Heart left ventricle (tissue), 16 donors: ENCODE measurements at regions of chr22 and their contacts with region 1.

Region 1: DNA sequence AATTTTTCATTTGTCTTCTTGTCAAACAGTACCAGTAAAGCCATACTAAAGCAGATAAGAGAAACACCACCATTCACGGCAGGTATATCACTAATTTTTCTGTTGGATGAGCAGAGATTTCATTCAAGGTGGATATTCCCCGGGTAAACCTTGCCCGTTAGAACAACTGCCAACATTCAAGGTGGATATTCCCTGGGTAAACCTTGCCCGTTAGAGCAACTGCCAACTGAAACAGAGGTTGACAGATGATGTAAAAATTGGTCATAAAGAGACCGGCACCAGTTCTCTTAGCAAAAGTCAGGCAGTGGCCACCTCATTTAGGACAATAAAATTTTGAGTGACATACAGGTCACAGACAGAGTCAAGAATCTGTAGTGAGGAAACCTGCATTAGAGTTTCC is 423.4 kb upstream of the SYN3 start:
- DNase-seq: no peak
- ATAC-seq: no peak
- H3K4me3 ChIP-seq: no peak overlapping the region
- H3K27ac ChIP-seq: no peak overlapping the region
- H3K4me1 ChIP-seq: peaks cover 0 to 23% (median 5%) of the 10 kb centered on the region in 12 donors
- H3K27me3 ChIP-seq: no peaks in the 10 kb centered on the region
- CTCF ChIP-seq: no peak
- POLR2A ChIP-seq: no peak

Region 2: DNA sequence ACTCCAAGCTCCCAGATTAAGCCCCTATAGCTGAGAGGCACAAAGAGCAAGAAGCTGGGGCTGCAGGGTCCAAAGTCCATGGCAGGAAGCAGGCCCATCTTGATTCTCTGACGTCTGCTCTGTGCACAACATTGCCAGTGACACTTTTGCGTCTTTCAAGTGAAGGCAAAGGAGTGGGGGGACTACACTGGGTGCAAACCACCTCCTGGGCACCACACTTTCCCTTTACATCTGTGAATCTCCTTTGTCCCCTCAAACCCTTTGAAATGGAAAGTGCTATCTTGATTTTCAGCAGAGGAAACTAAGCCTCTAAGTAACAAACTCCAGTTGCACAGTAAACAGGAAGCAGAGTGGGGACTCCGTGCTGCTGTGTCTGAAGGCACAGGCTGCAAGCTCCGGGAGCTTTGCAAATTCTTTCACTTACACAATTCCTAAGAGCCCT is 10.7 kb after region 1 on chr22:
- intact Hi-C with region 1: no loop called
- DNase-seq: no peak
- ATAC-seq: peak in 3 of 4 donors; percentile 47 to 72 (median 49)
- H3K4me3 ChIP-seq: peak overlapping the region in 8 of 12 donors; percentile 8 to 35 (median 26)
- H3K27ac ChIP-seq: peak overlapping the region in 10 of 12 donors; percentile 5 to 48 (median 33)
- H3K4me1 ChIP-seq: peaks cover 0 to 37% (median 12%) of the 10 kb centered on the region in 12 donors
- H3K27me3 ChIP-seq: no peaks in the 10 kb centered on the region
- CTCF ChIP-seq: no peak
- POLR2A ChIP-seq: no peak

Region 3: DNA sequence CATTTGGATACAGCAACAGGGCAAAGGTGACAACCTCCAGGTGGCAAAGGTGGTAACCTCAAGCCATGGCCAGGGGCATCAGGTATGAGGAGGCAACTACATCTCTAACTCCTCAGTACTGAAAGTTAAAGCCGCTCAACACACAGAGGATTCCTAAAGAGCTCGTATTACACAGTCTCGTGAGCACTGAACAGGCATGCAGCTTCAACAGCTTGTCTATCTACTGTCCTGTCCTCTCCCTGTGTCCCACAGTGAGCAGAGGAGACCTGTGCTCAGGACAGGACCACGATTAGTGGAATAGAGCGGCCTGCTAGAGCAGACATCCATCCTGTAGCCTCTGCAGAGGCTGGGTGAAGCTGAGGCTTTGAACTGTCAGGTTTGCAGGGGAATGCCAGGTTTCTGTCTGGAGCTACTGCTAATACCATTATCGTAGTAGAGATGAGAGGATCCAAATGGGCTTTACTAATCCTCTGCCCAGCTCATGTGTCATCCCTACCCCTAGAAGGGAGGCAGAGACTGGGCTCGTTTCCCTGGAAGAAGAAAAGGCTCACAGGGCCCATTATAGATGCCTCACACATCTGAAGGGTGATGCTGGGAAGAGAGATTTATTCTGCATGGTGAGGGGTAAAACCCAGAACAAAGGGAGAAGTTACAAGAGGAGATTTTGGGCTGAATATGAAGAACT is 23.5 kb after region 1 on chr22:
- intact Hi-C with region 1: loop called in 1 of 10 experiments (anchors 2 kb)
- DNase-seq: no peak
- ATAC-seq: peak; percentile 11 to 48 (median 33)
- H3K4me3 ChIP-seq: no peak overlapping the region
- H3K27ac ChIP-seq: no peak overlapping the region
- H3K4me1 ChIP-seq: peaks cover 0 to 10% (median 0%) of the 10 kb centered on the region in 12 donors
- H3K27me3 ChIP-seq: no peaks in the 10 kb centered on the region
- CTCF ChIP-seq: no peak
- POLR2A ChIP-seq: no peak